Spleen (tissue), 13 donors: ENCODE measurements at regions of chr17 and their contacts with region 1.

Region 1: GRCh38 chr17:76506408-76507349 is 5.5 kb upstream of the RHBDF2 start:
- DNase-seq: peak; percentile 96
- H3K4me3 ChIP-seq: no peak overlapping the region
- H3K27ac ChIP-seq: peak overlapping the region in 2 of 8 donors; percentile 16 to 21
- H3K4me1 ChIP-seq: peaks cover 5 to 50% (median 26%) of the 10 kb centered on the region in 6 donors
- H3K27me3 ChIP-seq: peaks cover 0 to 3% (median 0%) of the 10 kb centered on the region in 7 donors
- CTCF ChIP-seq: peak; percentile 96 to 99 (median 99)
- POLR2A ChIP-seq: no peak

Region 2: GRCh38 chr17:76408052-76408849 is 98.4 kb before region 1 on chr17:
- intact Hi-C with region 1: loop called (anchors 5 kb)
- DNase-seq: peak; percentile 93
- H3K4me3 ChIP-seq: no peak overlapping the region
- H3K27ac ChIP-seq: no peak overlapping the region
- H3K4me1 ChIP-seq: peaks cover 12 to 45% (median 39%) of the 10 kb centered on the region in 6 donors
- H3K27me3 ChIP-seq: no peaks in the 10 kb centered on the region
- CTCF ChIP-seq: peak; percentile 59 to 95 (median 82)
- POLR2A ChIP-seq: no peak

Region 3: DNA sequence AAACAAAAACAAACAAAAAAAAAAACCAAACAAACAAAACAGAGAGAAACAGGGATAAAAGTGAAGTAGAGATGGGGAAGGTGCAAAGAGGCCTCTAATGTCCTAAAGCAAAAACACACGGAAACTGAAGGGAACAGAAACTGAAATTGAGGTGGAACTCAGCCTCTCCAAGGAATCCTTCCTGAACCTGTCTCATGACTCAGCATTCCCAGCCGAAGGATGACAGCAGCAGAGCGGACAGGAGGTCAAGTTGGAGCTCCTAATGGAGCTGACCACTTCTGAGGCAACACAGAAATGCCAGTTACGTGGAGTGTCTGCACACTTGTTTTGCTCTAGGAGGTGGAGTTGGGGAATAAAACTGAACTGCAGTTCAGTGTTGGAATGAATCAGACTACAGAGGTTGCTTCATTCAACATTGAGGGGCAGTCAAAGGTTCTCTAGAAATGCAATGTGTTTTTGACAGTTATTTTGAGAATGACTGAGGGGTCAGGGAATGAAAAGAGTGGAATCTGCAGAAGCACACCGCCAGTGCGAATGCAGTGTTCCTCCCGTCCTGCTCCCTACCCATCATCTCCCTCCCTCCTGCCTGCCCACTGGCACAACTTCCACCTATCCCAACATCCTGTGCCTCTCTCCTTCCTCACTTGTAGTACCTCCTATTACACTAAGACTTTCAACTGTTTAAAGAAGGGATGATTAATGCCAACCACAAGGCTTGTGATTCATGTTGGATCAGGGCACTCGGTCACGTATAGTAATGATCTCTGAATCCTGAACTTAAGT is 60.0 kb before region 1 on chr17:
- intact Hi-C with region 1: no loop called
- DNase-seq: no peak
- H3K4me3 ChIP-seq: no peak overlapping the region
- H3K27ac ChIP-seq: no peak overlapping the region
- H3K4me1 ChIP-seq: peaks cover 6 to 94% (median 70%) of the 10 kb centered on the region in 6 donors
- H3K27me3 ChIP-seq: no peaks in the 10 kb centered on the region
- CTCF ChIP-seq: no peak
- POLR2A ChIP-seq: no peak

Region 4: DNA sequence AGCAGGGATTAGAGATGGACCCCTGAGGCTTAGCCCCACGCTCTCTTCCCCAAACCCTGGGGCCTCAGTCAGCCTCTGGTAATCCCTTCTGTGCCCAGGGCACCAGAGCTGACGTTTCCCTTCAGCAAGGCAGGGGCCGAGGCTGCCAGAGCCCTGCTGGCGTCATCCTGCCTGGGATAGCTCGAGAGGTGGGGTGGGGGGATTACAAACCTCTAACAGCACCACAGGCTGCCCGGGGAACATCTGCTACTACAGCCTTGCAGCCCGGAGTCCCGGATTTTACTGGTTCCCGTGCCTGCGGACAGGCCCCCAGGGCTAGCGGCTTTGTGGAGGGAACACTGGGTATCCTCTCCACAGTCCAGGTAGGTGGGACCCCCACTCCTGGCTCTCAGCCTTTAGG is 39.3 kb before region 1 on chr17 and contains the start of gene AANAT:
- intact Hi-C with region 1: loop called (anchors 5 kb)
- DNase-seq: no peak
- H3K4me3 ChIP-seq: no peak within 1 kb of the TSS
- H3K27ac ChIP-seq: peak within 1 kb of the TSS in 4 of 8 donors; percentile 23 to 55 (median 38)
- H3K4me1 ChIP-seq: peaks cover 7 to 32% (median 17%) of the 10 kb centered on the region in 6 donors
- H3K27me3 ChIP-seq: no peaks in the 10 kb centered on the region
- CTCF ChIP-seq: no peak
- POLR2A ChIP-seq: no peak
- total RNA-seq, gene AANAT: not detected